ENCODE measurements at regions of chr15 and their contacts with region 1.

Region 1: GRCh38 chr15:73697033-73697467 is 12.9 kb downstream of the CD276 start:
- DNase-seq: peak; percentile 72
- H3K4me3 ChIP-seq: no peak overlapping the region
- H3K27ac ChIP-seq: peak overlapping the region in 3 of 4 donors; percentile 37 to 48 (median 46)
- H3K4me1 ChIP-seq: peaks cover 10 to 33% (median 28%) of the 10 kb centered on the region in 4 donors
- H3K27me3 ChIP-seq: no peaks in the 10 kb centered on the region
- CTCF ChIP-seq: no peak
- EP300 ChIP-seq: no peak
- POLR2A ChIP-seq: no peak

Region 2: GRCh38 chr15:73560501-73561117 is 136.4 kb before region 1 on chr15:
- in situ Hi-C with region 1: loop called in 1 of 4 experiments (anchors 25 kb)
- intact Hi-C with region 1: loop called (anchors 10 kb)
- DNase-seq: no peak
- H3K4me3 ChIP-seq: no peak overlapping the region
- H3K27ac ChIP-seq: no peak overlapping the region
- H3K4me1 ChIP-seq: peaks cover 0 to 5% (median 0%) of the 10 kb centered on the region in 4 donors
- H3K27me3 ChIP-seq: no peaks in the 10 kb centered on the region
- CTCF ChIP-seq: peak; percentile 34 to 61 (median 51)
- EP300 ChIP-seq: no peak
- POLR2A ChIP-seq: no peak